Right lobe of liver (tissue), 6 donors: ENCODE measurements at regions of chr17 and their contacts with region 1.

Region 1: DNA sequence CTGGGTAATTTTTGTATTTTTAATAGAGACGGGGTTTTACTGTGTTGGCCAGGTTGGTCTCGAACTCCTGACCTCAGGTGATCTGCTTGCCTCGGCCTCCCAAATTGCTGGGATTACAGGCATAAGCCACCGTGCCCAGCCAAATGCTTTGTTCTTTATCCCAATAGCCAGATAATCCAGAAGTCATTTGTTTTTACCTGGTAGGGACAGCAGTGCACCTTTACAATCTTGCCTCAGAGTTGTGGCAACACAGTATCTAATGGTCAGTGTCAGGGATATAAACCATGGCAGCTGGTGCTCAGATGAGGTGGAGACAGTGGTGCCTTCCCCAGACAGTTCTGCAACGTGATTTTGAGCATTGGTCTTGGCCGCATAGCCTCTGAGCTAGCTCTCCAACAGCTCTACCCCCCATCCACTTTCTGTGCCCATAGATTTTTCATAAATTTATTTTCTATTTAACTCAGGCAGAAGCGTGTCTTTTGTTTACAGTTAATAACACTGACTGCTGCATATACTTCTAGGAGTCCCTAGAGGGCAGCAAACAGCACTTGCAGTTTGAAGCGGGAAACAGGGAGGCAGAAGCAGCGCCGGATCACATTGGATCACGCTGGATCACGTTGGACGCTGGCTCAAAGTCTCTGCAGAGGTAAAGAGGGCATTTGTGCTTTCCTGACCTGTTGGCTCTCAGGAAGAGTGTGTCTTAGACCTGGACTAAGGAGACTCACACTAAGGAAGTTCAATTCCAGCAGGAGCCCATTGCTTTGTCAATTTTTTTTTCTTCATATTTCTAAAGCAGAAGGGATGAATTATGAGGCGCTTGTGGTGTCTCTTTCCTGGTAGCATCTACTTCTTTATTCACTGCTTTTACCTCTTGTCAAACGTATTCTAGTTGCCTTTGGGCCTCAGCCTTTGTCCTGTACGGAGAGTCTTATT is 5.1 kb upstream of the GGT6 start:
- DNase-seq: peak; percentile 62 to 81 (median 80)
- ATAC-seq: peak; percentile 95 to 97 (median 97)
- H3K4me3 ChIP-seq: no peak overlapping the region
- H3K27ac ChIP-seq: peak overlapping the region in 1 of 3 donors; percentile 12
- H3K4me1 ChIP-seq: peaks cover 0 to 8% (median 0%) of the 10 kb centered on the region in 4 donors
- H3K27me3 ChIP-seq: no peaks in the 10 kb centered on the region
- CTCF ChIP-seq: peak; percentile 75 to 87 (median 80)
- POLR2A ChIP-seq: no peak

Region 2: DNA sequence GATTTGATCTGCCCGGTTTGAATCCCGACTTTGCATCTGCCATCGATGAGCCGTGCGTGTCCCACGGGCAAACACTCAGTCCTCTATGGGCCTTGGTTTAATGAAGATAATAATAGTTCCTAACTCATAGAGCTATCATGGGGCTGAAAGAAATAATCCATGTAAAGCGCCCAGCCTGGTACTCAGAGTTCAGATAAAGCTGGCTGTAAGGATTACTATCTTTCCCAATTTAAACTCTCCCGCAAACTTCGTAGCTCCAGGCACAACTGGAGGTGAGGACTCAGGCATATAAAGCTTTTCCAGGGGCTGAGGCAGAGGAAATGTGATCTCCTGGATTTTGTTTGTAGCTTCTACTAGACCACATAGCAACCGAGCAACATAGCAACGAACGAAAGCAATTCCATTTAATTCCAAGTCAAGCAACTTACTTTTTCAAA is 59.7 kb after region 1 on chr17:
- intact Hi-C with region 1: loop called (anchors 5 to 10 kb)
- DNase-seq: no peak
- ATAC-seq: no peak
- H3K4me3 ChIP-seq: no peak overlapping the region
- H3K27ac ChIP-seq: no peak overlapping the region
- H3K4me1 ChIP-seq: no peaks in the 10 kb centered on the region
- H3K27me3 ChIP-seq: no peaks in the 10 kb centered on the region
- CTCF ChIP-seq: no peak
- POLR2A ChIP-seq: no peak